Activated naive CD4-positive, alpha-beta T cell treated with anti-CD3 and anti-CD28 coated beads for 36 hours (primary cell): ENCODE measurements at regions of chr15 and their contacts with region 1.

Region 1: GRCh38 chr15:28945626-28946230 is 60.0 kb downstream of the APBA2 start:
- DNase-seq: no peak
- H3K4me3 Mint-ChIP-seq: no peak overlapping the region
- H3K27ac Mint-ChIP-seq: no peak overlapping the region
- H3K4me1 Mint-ChIP-seq: peaks cover 68% of the 10 kb centered on the region
- H3K27me3 Mint-ChIP-seq: no peaks in the 10 kb centered on the region

Region 2: GRCh38 chr15:28962851-28963710 is 17.4 kb after region 1 on chr15:
- CTCF ChIA-PET with region 1: no interaction called
- intact Hi-C with region 1: loop called (anchors 2 kb)
- DNase-seq: no peak
- H3K4me3 Mint-ChIP-seq: no peak overlapping the region
- H3K27ac Mint-ChIP-seq: no peak overlapping the region
- H3K4me1 Mint-ChIP-seq: peaks cover 40% of the 10 kb centered on the region
- H3K27me3 Mint-ChIP-seq: no peaks in the 10 kb centered on the region

Region 3: GRCh38 chr15:29018120-29018805 is 72.5 kb after region 1 on chr15:
- CTCF ChIA-PET with region 1: no interaction called
- intact Hi-C with region 1: no loop called
- DNase-seq: no peak
- H3K4me3 Mint-ChIP-seq: no peak overlapping the region
- H3K27ac Mint-ChIP-seq: no peak overlapping the region
- H3K4me1 Mint-ChIP-seq: peaks cover 26% of the 10 kb centered on the region
- H3K27me3 Mint-ChIP-seq: no peaks in the 10 kb centered on the region

Region 4: DNA sequence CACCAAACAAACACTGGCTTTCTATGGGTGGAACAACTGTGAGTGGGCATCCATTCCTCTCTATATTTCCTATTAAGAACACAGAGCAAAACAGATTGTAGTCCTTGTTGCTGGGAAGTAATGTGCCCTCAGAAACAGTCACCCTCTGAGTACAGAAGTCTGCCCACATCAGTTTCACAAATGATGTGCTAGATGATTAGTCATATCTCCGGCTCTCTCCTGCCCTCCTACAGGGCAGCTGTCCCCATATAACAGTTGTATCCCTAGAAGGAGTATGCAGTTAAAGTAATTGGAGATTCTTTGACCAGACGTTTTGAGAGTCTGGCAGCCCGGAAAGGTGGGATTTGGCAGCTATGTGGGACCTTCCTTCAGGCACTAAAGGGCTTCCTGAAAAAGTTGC is 100.0 kb after region 1 on chr15:
- CTCF ChIA-PET with region 1: no interaction called
- intact Hi-C with region 1: loop called (anchors 5 kb)
- DNase-seq: peak; percentile 45
- H3K4me3 Mint-ChIP-seq: no peak overlapping the region
- H3K27ac Mint-ChIP-seq: no peak overlapping the region
- H3K4me1 Mint-ChIP-seq: peaks cover 48% of the 10 kb centered on the region
- H3K27me3 Mint-ChIP-seq: no peaks in the 10 kb centered on the region